ENCODE measurements at regions of chr2 and their contacts with region 1.

Region 1: DNA sequence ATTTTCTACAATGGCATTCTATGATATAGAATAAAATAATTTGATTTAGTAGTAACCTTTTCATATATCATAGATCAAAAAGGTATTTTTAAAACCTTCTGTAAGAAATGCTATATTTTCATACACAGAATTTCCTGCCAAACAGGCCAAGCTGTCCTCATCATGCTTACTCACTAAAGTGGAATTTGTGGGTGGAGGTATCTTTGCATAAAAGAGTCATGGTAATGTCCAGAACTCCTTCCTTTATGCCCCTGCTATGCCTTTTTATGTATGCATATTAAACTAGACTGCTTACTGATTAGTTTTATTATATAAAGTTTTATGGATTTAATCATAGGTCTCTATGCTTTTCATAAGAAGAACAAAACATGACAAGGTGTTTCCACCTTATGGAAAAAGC is 27.5 kb upstream of the MARCHF7 start:
- DNase-seq: peak; percentile 75
- ATAC-seq: peak; percentile 73
- H3K4me3 ChIP-seq: no peak overlapping the region
- H3K27ac ChIP-seq: no peak overlapping the region
- H3K4me1 ChIP-seq: peaks cover 3% of the 10 kb centered on the region; the same call in 1 of the 2 replicates
- H3K27me3 ChIP-seq: no peaks in the 10 kb centered on the region
- CTCF ChIP-seq: no peak
- POLR2A ChIP-seq: no peak
- RAD21 ChIP-seq: no peak

Region 2: GRCh38 chr2:159633219-159633618 is 51.6 kb before region 1 on chr2:
- CTCF ChIA-PET with region 1: no interaction called
- POLR2A ChIA-PET with region 1: no interaction called
- dilution Hi-C with region 1: no loop called
- in situ Hi-C with region 1: no loop called
- intact Hi-C with region 1: loop called (anchors 5 kb)
- DNase-seq: no peak
- ATAC-seq: no peak
- H3K4me3 ChIP-seq: no peak overlapping the region
- H3K27ac ChIP-seq: no peak overlapping the region
- H3K4me1 ChIP-seq: peaks cover 5% of the 10 kb centered on the region
- H3K27me3 ChIP-seq: no peaks in the 10 kb centered on the region
- CTCF ChIP-seq: no peak
- POLR2A ChIP-seq: no peak
- RAD21 ChIP-seq: no peak

Region 3: GRCh38 chr2:159773426-159773825 is 88.6 kb after region 1 on chr2:
- CTCF ChIA-PET with region 1: no interaction called
- POLR2A ChIA-PET with region 1: no interaction called
- dilution Hi-C with region 1: no loop called
- in situ Hi-C with region 1: no loop called
- intact Hi-C with region 1: no loop called
- DNase-seq: peak; percentile 12
- ATAC-seq: no peak
- H3K4me3 ChIP-seq: no peak overlapping the region
- H3K27ac ChIP-seq: no peak overlapping the region
- H3K4me1 ChIP-seq: peaks cover 3% of the 10 kb centered on the region; the same call in 1 of the 2 replicates
- H3K27me3 ChIP-seq: no peaks in the 10 kb centered on the region
- CTCF ChIP-seq: no peak
- POLR2A ChIP-seq: no peak
- RAD21 ChIP-seq: no peak

Region 4: GRCh38 chr2:160075171-160075570 is 390.4 kb after region 1 on chr2:
- CTCF ChIA-PET with region 1: no interaction called
- POLR2A ChIA-PET with region 1: no interaction called
- dilution Hi-C with region 1: no loop called
- in situ Hi-C with region 1: no loop called
- intact Hi-C with region 1: no loop called
- DNase-seq: peak; percentile 33
- ATAC-seq: no peak
- H3K4me3 ChIP-seq: no peak overlapping the region
- H3K27ac ChIP-seq: no peak overlapping the region
- H3K4me1 ChIP-seq: no peaks in the 10 kb centered on the region
- H3K27me3 ChIP-seq: peaks cover 25% of the 10 kb centered on the region
- CTCF ChIP-seq: no peak
- POLR2A ChIP-seq: no peak
- RAD21 ChIP-seq: no peak

Measured in IMR-90 (cell line).